ENCODE measurements at regions of chr14 and their contacts with region 1.

Region 1: DNA sequence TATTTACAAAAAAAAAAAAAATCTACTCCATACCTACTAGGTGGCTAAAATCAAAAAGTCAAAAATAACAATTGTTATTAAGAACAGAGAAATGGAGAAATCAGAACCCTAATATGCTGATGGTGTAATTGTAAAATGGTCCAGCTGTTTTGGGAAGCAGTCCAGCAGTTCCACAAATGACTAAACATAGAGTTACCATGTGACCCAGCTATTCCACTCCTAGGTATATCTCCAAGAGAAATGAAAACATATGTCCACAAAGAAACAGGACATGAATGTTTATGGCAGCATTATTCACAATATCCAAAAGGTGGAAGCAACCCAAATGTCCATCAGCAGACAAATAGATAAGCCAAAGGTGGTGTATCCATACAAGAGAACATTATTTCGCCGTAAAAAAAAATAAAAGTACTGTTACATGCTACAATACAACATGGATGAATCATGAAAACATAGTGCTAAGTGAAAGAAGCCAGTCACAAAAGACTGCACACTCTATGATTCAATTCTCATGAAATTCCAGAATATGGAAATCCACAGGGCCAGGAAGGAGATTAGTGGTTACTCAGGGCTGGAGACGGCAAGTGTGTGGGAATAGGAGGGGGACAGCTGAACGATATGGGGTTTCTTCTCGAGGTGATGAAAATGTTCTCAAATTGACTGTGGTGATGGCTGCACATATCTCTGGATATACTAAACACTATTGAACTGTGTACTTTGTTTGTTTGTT is 9.1 kb upstream of the DPF3 start:
- DNase-seq: no peak
- H3K4me3 ChIP-seq: no peak overlapping the region
- H3K27ac ChIP-seq: no peak overlapping the region
- H3K4me1 ChIP-seq: no peaks in the 10 kb centered on the region
- H3K27me3 ChIP-seq: no peaks in the 10 kb centered on the region
- CTCF ChIP-seq: no peak
- POLR2A ChIP-seq: no peak

Region 2: DNA sequence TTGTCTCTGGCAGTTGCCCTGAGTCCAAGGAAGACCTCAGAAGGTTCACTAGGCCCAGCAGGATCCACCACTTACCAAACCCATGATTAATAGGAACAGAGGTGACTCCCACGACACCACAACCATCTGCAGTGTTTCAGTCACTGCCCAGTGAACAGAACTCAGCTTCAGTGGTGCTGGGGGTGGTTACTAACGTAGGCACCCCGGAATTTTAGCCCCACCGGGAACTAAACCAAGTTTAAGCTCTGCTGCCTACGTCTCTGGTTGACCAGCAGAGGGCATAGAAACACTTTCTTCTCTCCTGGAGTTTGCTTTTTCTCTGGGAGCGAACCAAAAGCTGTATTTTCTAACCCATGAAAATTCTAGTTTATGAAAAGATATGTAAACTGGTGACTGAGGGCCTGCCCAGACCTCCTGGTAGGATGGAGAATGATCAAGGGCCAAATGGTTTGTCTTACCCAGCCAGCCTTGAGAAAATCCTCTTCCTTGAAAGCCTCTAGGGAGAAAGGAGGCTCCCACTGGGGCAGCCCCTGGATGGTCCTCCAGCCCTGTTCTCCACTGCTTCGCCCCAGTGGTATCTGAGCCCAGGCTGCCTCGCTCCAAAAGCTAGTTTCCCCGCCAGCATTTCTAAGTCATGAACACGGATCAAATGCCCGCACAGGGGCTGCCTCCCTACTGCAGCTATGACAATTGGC is 388.9 kb before region 1 on chr14:
- intact Hi-C with region 1: loop called (anchors 2 kb)
- DNase-seq: peak in 1 of 2 donors; percentile 58
- H3K4me3 ChIP-seq: no peak overlapping the region
- H3K27ac ChIP-seq: no peak overlapping the region
- H3K4me1 ChIP-seq: no peaks in the 10 kb centered on the region
- H3K27me3 ChIP-seq: no peaks in the 10 kb centered on the region
- CTCF ChIP-seq: peak in 1 of 3 experiments; percentile 9
- POLR2A ChIP-seq: no peak

Measured in vagina (tissue), 2 donors.